ENCODE measurements at regions of chr21 and their contacts with region 1.

Region 1: DNA sequence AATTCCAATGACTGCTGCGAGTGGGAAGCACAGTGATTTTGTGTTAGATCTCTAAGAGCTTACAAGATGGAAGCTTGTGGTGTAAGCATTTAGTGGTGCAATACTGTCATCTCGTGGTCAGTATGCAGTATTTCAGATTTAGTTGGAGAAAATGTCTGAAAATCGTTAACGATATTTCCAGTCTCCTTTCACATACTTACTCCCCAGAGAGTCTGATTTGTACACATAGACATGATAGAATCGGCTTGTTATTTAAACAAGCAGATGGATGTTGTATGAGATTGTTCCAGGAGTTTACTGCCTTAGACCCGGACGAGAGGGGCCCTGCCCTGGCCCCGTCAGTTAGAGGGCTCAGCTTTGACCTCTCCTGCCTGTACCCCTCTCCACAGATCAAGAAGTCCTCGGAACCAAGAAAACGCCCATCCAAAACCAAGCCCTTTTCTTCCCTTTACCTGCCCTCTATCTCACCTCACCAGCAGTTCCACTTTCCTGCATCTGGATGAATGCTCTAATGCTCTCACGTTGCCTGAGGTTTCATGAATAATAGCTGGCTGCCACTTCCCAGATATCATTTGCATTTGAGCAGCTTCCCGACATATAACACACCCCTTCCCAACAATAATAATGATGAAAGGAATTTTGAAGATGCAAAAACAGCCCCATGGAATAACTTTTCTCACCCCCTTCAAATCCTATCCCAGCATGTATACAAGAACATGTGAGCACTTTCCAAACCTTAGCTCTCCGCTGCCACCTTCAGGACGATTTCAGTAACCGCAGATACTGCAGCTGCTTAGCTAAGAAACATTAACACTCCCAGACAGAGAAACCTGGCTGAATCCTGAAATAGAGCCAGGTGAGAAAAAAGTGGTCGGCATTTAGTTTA is 247.3 kb downstream of the LTN1 start:
- DNase-seq: peak; percentile 69 to 80 (median 73)
- ATAC-seq: peak; percentile 85 to 93 (median 87)
- H3K4me3 ChIP-seq: peak overlapping the region; percentile 19 to 63 (median 51)
- H3K27ac ChIP-seq: peak overlapping the region; percentile 58 to 90 (median 82)
- H3K4me1 ChIP-seq: peaks cover 0 to 29% (median 7%) of the 10 kb centered on the region in 12 donors
- H3K27me3 ChIP-seq: no peaks in the 10 kb centered on the region
- CTCF ChIP-seq: peak; percentile 87 to 98 (median 92)
- POLR2A ChIP-seq: no peak

Region 2: GRCh38 chr21:26769613-26770188 is 1975.7 kb before region 1 on chr21:
- intact Hi-C with region 1: loop called in 2 of 10 experiments (anchors 2 to 10 kb)
- DNase-seq: no peak
- ATAC-seq: peak in 1 of 4 donors; percentile 42
- H3K4me3 ChIP-seq: no peak overlapping the region
- H3K27ac ChIP-seq: peak overlapping the region in 2 of 12 donors; percentile 0 to 7
- H3K4me1 ChIP-seq: peaks cover 0 to 3% (median 0%) of the 10 kb centered on the region in 12 donors
- H3K27me3 ChIP-seq: no peaks in the 10 kb centered on the region
- CTCF ChIP-seq: peak; percentile 57 to 76 (median 70)
- POLR2A ChIP-seq: no peak

Region 3: GRCh38 chr21:27564684-27565301 is 1180.6 kb before region 1 on chr21:
- intact Hi-C with region 1: loop called in 1 of 10 experiments (anchors 10 kb)
- DNase-seq: peak in 4 of 5 donors; percentile 30 to 40 (median 38)
- ATAC-seq: peak in 3 of 4 donors; percentile 71 to 76 (median 76)
- H3K4me3 ChIP-seq: no peak overlapping the region
- H3K27ac ChIP-seq: no peak overlapping the region
- H3K4me1 ChIP-seq: peaks cover 0 to 3% (median 0%) of the 10 kb centered on the region in 12 donors
- H3K27me3 ChIP-seq: no peaks in the 10 kb centered on the region
- CTCF ChIP-seq: peak; percentile 58 to 92 (median 76)
- POLR2A ChIP-seq: no peak

Region 4: DNA sequence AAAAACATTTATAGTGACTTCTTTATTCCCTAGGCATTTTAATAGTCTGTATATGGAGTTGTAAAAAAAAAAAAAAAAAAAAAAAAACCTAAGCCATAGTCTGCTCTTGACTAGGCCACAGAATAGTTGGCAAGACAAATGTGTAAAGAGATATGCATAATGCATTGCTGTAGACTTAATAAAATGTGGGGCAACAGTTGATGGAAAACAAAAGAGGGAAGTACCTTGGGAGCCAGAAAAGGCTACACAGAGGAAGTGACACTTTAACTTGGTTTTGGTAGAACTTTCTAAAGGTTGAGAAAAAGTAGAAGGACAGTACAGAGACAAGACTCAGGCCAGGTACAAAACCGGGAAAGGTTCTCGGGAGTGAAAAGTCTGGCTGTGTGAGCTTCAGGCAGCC is 975.6 kb before region 1 on chr21:
- intact Hi-C with region 1: loop called in 2 of 10 experiments (anchors 5 to 10 kb)
- DNase-seq: no peak
- ATAC-seq: no peak
- H3K4me3 ChIP-seq: no peak overlapping the region
- H3K27ac ChIP-seq: peak overlapping the region in 4 of 12 donors; percentile 9 to 24 (median 14)
- H3K4me1 ChIP-seq: peaks cover 0 to 23% (median 2%) of the 10 kb centered on the region in 12 donors
- H3K27me3 ChIP-seq: no peaks in the 10 kb centered on the region
- CTCF ChIP-seq: no peak
- POLR2A ChIP-seq: no peak

Region 5: GRCh38 chr21:28336314-28336713 is 409.1 kb before region 1 on chr21:
- intact Hi-C with region 1: loop called (anchors 1 to 10 kb)
- DNase-seq: peak in 1 of 5 donors; percentile 18
- ATAC-seq: peak in 3 of 4 donors; percentile 34 to 55 (median 38)
- H3K4me3 ChIP-seq: no peak overlapping the region
- H3K27ac ChIP-seq: peak overlapping the region in 2 of 12 donors; percentile 26 to 34
- H3K4me1 ChIP-seq: peaks cover 0 to 36% (median 8%) of the 10 kb centered on the region in 12 donors
- H3K27me3 ChIP-seq: no peaks in the 10 kb centered on the region
- CTCF ChIP-seq: peak; percentile 19 to 74 (median 57)
- POLR2A ChIP-seq: no peak

Region 6: DNA sequence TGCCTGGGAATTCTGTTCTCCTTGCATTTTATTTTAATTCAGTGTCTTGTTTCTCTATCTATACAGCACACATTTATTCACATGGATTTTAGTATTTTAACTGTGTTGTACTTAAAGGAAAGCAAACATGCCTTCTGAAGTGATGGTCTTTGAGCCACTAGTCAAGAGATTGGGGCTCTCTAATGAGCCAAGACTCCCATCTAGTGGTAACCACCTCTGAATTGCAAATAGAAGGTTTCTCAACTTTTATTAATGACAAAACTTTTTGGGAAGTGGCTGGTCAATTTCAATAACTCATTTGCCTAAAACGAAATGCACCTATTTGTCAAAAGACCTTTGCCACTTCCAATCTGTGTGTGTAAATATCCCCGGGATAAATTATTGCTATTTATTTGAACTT is 47.7 kb after region 1 on chr21:
- intact Hi-C with region 1: loop called in 3 of 10 experiments (anchors 1 to 5 kb)
- DNase-seq: no peak
- ATAC-seq: peak in 2 of 4 donors; percentile 59 to 72
- H3K4me3 ChIP-seq: no peak overlapping the region
- H3K27ac ChIP-seq: no peak overlapping the region
- H3K4me1 ChIP-seq: peaks cover 0 to 12% (median 5%) of the 10 kb centered on the region in 12 donors
- H3K27me3 ChIP-seq: no peaks in the 10 kb centered on the region
- CTCF ChIP-seq: peak in 10 of 12 donors; percentile 38 to 65 (median 54)
- POLR2A ChIP-seq: no peak

Measured in heart left ventricle (tissue), 16 donors.